Activated naive CD8-positive, alpha-beta T cell treated with anti-CD3 and anti-CD28 coated beads, Interleukin-2, amount 10 ng/mL, durations not matched to agents 7 days and 5 days (primary cell): ENCODE measurements at regions of chr10 and their contacts with region 1.

Region 1: GRCh38 chr10:97686962-97687784 is at the start of gene AVPI1:
- DNase-seq: peak; percentile 97
- ATAC-seq: peak; percentile 96
- H3K4me3 Mint-ChIP-seq: peak within 1 kb of the TSS; percentile 87
- H3K27ac Mint-ChIP-seq: peak within 1 kb of the TSS; percentile 63
- H3K4me1 Mint-ChIP-seq: peaks cover 14% of the 10 kb centered on the region
- H3K27me3 Mint-ChIP-seq: peaks cover 8% of the 10 kb centered on the region
- total RNA-seq, gene AVPI1: 2.4 to 2.9 TPM

Region 2: DNA sequence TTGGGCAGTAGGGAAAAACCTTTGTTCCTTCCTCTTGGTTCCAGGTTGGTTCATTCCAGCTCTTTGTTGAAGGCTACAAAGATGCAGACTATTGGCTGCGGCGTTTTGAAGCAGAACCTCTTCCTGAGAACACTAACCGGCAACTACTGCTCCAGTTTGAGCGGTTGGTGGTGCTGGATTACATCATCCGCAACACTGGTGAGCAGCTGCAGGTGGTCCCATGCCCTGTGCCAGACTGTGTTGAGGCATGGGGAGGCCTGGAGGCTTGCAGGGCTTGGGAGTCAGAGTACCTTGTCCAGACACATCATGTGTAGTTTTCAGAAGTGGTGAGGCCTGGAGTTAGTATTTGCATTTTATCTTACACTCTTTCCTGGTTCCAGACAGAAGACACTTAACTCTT is 30.4 kb before region 1 on chr10:
- POLR2A ChIA-PET with region 1: no interaction called
- DNase-seq: no peak
- ATAC-seq: no peak
- H3K4me3 Mint-ChIP-seq: no peak overlapping the region
- H3K27ac Mint-ChIP-seq: no peak overlapping the region
- H3K4me1 Mint-ChIP-seq: no peaks in the 10 kb centered on the region
- H3K27me3 Mint-ChIP-seq: no peaks in the 10 kb centered on the region

Region 3: DNA sequence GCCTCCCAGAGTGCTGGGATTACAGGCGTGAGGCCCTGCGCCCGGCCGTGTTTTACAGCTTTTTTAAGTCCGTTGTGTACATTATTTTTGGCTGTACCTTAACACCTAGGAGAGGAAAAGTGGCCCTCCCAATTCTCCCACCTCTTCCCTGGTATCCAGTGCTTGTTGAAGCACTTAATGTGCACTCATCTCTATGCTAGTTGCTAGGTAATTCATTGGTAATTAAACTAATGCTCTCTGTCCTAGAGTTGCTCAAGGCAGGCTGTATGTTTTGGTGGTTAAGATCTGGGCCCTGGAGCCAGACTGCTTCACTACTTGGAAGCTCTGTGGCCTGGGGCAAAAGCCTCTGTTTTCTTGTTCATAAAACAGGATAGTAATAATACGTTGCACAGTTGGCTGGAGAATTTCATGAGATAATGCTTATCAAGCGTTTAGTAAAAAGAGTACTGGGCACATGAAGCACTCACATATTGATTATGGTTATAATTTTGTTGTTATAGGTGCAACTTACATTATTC is 19.7 kb before region 1 on chr10:
- POLR2A ChIA-PET with region 1: no interaction called
- DNase-seq: no peak
- ATAC-seq: no peak
- H3K4me3 Mint-ChIP-seq: no peak overlapping the region
- H3K27ac Mint-ChIP-seq: no peak overlapping the region
- H3K4me1 Mint-ChIP-seq: peaks cover 3% of the 10 kb centered on the region
- H3K27me3 Mint-ChIP-seq: no peaks in the 10 kb centered on the region

Region 4: GRCh38 chr10:97736902-97737769 is 50.0 kb after region 1 on chr10 and contains the start of gene ZFYVE27:
- POLR2A ChIA-PET with region 1: interaction called, 12 read pairs
- DNase-seq: peak; percentile 97
- ATAC-seq: peak; percentile 84
- H3K4me3 Mint-ChIP-seq: peak within 1 kb of the TSS; percentile 96
- H3K27ac Mint-ChIP-seq: peak within 1 kb of the TSS; percentile 97
- H3K4me1 Mint-ChIP-seq: peaks cover 30% of the 10 kb centered on the region
- H3K27me3 Mint-ChIP-seq: no peaks in the 10 kb centered on the region
- total RNA-seq, gene ZFYVE27: 36.9 to 43.4 TPM